Activated T-helper 1 cell treated with anti-CD3 and anti-CD28 coated beads, Interleukin-12 subunit alpha, Interleukin-12 subunit beta, Interleukin-2, Interleukin-4 antibody, amounts not matched to agents 30 ng/mL and 10 ng/mL and 1 ng/mL, durations not matched to agents 14 hours and 24 hours and 36 hours (primary cell): ENCODE measurements at regions of chr6 and their contacts with region 1.

Region 1: DNA sequence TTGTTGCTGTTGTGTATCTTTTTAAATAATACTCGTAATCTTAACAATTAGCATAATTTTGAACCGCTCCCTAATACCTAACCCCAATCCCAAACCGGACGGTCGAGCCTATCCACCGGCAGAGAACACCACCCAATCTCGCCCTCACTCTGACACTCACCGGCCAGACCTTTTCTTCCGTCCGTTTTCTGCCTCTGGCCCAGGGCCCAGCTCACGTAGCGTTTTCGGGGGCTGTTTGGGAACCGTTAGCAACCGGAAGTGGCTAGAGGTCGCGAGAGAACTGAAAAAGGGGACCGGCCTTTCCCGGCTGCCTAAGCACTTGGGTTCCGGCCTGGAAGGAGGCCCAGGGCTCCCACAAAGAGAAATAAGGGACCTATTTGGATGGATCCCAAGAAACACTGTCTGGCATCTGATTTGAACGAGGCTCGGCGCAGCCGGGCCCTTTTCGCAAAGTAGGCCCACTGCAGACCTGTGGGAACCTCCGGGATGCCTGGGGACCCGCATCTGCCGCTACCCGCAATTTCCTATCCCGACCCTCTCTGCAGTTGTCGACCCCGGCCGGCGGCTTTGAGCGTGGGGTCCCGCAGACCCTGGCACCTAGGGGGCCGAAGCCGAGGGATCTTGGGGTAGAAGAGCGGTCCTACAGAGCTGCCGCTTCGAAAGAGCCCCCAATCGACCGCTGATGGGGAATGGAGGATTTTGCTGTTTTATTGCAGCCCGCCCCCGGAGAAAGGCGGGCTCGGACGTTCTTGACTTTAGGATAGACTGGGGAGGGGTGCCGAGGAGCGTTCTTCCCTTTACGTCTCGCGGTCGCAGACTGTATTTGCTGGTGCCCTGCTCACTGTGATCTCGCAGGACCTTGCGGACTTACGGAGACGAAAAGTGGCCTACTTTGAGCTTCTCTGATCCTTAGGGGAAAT is 4.8 kb upstream of the ZKSCAN8 start:
- DNase-seq: peak; percentile 65
- H3K4me3 Mint-ChIP-seq: peak overlapping the region; percentile 95
- H3K27ac Mint-ChIP-seq: peak overlapping the region; percentile 91
- H3K4me1 Mint-ChIP-seq: peaks cover 78% of the 10 kb centered on the region
- H3K27me3 Mint-ChIP-seq: no peaks in the 10 kb centered on the region

Region 2: DNA sequence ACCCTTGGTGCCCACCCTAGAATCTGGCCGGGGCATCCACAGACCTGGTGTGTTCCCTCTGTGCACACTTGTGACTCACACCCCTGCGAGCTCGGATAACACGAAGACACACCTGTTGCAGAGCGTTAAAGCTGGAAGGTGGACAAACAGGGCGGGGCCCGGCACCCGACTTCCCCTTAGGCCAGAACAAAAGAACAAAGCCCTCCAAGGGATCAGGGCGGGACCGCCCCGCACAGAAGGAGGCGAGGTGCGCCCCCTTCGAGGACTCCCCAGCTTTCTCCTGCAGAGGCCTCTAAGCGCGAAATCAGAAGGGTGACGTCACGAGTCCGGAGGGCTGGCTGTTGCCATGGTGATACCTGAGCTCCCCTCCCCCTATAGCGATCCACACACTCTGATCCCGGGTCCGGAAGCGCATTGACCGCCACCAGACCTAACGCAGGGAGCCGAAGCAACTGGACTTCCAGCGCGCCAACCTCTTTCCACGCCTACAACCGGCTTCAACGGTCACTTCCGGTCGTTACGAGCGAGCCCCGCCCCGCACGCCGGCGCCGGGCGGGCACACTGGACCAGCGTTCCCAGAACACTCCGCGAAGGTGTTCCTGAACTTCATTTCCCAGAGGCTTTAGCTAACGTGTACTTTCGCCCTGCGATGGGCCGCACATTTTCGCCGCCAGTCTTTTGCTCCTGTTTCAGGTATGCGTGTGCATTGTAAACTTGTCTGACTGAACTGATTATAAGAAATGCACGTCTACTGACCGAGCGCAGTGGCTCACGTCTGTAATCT is 664.0 kb before region 1 on chr6 and contains the start of gene ZNF184:
- intact Hi-C with region 1: loop called (anchors 10 kb)
- DNase-seq: peak; percentile 85
- H3K4me3 Mint-ChIP-seq: peak within 1 kb of the TSS; percentile 89
- H3K27ac Mint-ChIP-seq: peak within 1 kb of the TSS; percentile 93
- H3K4me1 Mint-ChIP-seq: peaks cover 46% of the 10 kb centered on the region
- H3K27me3 Mint-ChIP-seq: no peaks in the 10 kb centered on the region
- total RNA-seq, gene ZNF184: 7.6 and 8.0 TPM in 2 replicates

Region 3: DNA sequence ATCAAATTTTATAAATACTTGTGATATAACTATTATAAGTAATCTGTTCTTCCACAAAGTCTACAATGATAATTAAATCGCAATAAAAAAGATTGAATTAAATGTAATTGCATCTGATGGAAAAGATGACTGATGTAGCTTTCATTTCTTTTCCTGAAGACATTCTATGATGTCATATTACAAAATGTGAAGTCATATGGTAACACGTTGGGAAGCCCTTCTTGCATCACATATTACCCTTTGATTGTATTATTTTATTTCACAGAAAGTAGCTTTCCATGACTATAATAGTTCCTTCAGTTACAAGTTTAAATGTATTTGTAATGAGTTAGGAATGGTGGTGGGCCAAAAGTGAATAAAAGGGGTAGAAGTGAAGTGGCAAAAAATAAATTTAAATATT is 205.6 kb before region 1 on chr6:
- intact Hi-C with region 1: no loop called
- DNase-seq: no peak
- H3K4me3 Mint-ChIP-seq: no peak overlapping the region
- H3K27ac Mint-ChIP-seq: no peak overlapping the region
- H3K4me1 Mint-ChIP-seq: no peaks in the 10 kb centered on the region
- H3K27me3 Mint-ChIP-seq: peaks cover 12% of the 10 kb centered on the region

Region 4: GRCh38 chr6:28104392-28105244 is 32.2 kb before region 1 on chr6:
- intact Hi-C with region 1: loop called (anchors 1 kb)
- DNase-seq: peak; percentile 75
- H3K4me3 Mint-ChIP-seq: peak overlapping the region; percentile 83
- H3K27ac Mint-ChIP-seq: peak overlapping the region; percentile 61
- H3K4me1 Mint-ChIP-seq: peaks cover 5% of the 10 kb centered on the region
- H3K27me3 Mint-ChIP-seq: peaks cover 18% of the 10 kb centered on the region

Region 5: GRCh38 chr6:28212510-28213212 is 75.8 kb after region 1 on chr6:
- intact Hi-C with region 1: loop called (anchors 2 kb)
- DNase-seq: no peak
- H3K4me3 Mint-ChIP-seq: peak overlapping the region; percentile 82
- H3K27ac Mint-ChIP-seq: peak overlapping the region; percentile 67
- H3K4me1 Mint-ChIP-seq: peaks cover 36% of the 10 kb centered on the region
- H3K27me3 Mint-ChIP-seq: peaks cover 86% of the 10 kb centered on the region

Region 6: GRCh38 chr6:28266962-28267694 is 130.3 kb after region 1 on chr6 and contains the start of gene ZSCAN26:
- intact Hi-C with region 1: loop called (anchors 1 kb)
- DNase-seq: peak; percentile 78
- H3K4me3 Mint-ChIP-seq: no peak within 1 kb of the TSS
- H3K27ac Mint-ChIP-seq: no peak within 1 kb of the TSS
- H3K4me1 Mint-ChIP-seq: peaks cover 9% of the 10 kb centered on the region
- H3K27me3 Mint-ChIP-seq: peaks cover 2% of the 10 kb centered on the region
- total RNA-seq, gene ZSCAN26: 5.4 and 6.0 TPM in 2 replicates

Region 7: GRCh38 chr6:28399350-28400121 is 262.7 kb after region 1 on chr6 and contains the start of gene ZSCAN12:
- intact Hi-C with region 1: loop called (anchors 1 kb)
- DNase-seq: peak; percentile 76
- H3K4me3 Mint-ChIP-seq: peak within 1 kb of the TSS; percentile 90
- H3K27ac Mint-ChIP-seq: peak within 1 kb of the TSS; percentile 84
- H3K4me1 Mint-ChIP-seq: peaks cover 48% of the 10 kb centered on the region
- H3K27me3 Mint-ChIP-seq: peaks cover 15% of the 10 kb centered on the region
- total RNA-seq, gene ZSCAN12: 5.6 and 5.7 TPM in 2 replicates

Region 8: GRCh38 chr6:29016559-29017427 is 879.9 kb after region 1 on chr6:
- intact Hi-C with region 1: loop called (anchors 10 kb)
- DNase-seq: peak; percentile 76
- H3K4me3 Mint-ChIP-seq: peak overlapping the region; percentile 87
- H3K27ac Mint-ChIP-seq: peak overlapping the region; percentile 89
- H3K4me1 Mint-ChIP-seq: peaks cover 22% of the 10 kb centered on the region
- H3K27me3 Mint-ChIP-seq: peaks cover 22% of the 10 kb centered on the region